ENCODE measurements at regions of chr10 and their contacts with region 1.

Region 1: DNA sequence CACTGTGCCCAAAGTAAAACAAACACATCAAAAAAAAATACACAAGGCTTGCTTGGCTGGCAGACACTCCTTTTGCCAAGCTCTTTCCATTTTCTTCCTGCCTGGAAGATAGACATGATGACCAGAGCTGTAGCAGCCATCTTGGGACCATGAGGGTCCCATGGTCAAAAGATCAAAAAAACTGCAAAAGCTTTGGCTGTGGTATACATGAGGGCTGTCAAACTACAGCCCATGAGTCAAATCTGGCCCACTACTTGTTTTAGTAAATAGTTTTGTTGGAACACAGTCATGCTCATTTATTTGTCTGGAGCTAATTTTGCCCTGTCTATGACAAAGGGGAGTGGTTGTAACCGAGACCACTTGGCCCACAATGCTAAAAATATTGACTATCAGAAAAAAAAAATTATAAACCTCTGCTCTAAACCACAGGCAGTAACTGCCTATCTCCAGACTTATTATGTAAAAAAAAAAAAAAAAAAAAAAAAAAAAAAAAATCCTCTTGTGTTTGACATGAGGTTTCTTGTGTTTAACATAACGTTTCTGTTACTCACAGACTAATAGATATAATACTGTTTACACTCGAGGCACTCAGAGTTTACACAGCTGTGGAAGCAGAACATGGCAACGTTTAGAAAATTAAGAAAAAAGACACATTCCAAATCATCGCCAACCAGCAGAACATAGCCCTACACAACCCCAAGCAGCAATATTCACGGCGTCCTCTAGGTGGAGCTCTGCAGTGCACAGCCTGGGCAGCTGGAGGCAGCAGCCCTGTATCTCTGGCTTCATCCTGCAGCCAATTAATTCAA is 36.9 kb downstream of the ASB13 start:
- DNase-seq: peak; percentile 78
- CTCF ChIP-seq: peak; percentile 93

Region 2: GRCh38 chr10:5434017-5434753 is 195.3 kb before region 1 on chr10:
- CTCF ChIA-PET with region 1: interaction called, 145 read pairs
- POLR2A ChIA-PET with region 1: no interaction called
- DNase-seq: peak; percentile 31
- CTCF ChIP-seq: peak; percentile 66

Region 3: GRCh38 chr10:5446390-5446926 is 183.0 kb before region 1 on chr10:
- CTCF ChIA-PET with region 1: interaction called, 145 read pairs
- POLR2A ChIA-PET with region 1: no interaction called
- DNase-seq: peak; percentile 58
- CTCF ChIP-seq: no peak

Region 4: DNA sequence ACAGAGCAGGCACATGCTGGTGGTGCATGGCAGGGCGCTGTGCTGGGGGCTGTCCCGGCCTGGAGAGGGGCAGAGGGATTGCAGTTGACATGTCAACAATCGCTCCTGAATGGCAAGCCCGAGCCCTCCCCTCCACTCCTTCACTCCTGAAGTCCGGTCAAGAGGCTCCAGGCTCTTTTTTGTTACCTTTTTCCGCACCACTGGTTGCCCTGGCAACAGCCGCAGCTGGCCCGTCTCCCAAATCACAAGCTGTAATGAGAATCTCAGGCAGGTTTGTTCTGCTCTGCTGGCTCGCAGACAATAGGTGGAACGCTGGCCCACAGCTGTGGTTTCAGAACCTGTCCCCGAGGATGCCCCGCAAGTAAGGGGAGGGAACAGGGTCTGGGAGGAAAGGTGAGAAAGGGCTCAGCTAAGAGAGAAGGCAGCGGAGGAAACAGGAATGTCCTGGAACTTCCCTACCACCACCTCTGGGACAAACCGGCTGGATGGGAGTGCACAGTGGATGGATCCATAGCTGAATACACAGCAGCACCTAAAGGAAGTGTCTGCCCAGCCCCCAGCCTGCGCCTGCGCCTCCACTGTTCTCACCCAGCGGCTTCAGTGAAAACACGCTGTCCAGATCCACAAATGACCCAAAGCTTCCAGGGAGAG is 45.9 kb before region 1 on chr10:
- CTCF ChIA-PET with region 1: interaction called, 17 read pairs
- POLR2A ChIA-PET with region 1: no interaction called
- DNase-seq: no peak
- CTCF ChIP-seq: no peak

Region 5: DNA sequence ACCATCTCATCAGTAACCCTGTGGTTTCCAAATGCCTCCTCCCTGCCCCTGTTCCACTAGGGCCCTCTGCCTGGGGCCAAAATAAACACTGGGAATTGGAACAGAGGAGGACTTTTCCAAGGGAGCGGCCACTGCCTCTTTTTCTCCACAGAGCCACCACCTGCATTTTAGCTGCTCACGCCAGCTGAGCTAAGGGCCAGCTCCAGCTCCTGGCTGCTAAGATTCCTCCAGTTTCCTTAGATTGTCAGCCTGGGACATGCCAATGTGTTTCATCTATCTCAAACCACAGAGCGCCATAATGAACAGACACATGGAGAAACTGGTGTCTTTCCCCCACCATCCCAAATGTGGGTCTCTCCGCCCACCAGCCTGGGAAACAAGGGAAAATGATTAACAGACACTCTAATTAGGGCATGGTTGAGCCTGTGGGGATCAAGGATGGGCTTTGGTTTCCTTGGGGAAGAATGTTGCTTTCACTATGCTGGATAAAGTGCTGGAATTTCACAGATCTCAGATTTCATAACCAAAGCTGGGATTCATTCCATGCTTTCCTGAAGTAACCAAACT is 15.3 kb before region 1 on chr10:
- CTCF ChIA-PET with region 1: interaction called, 73 read pairs
- POLR2A ChIA-PET with region 1: no interaction called
- DNase-seq: no peak
- CTCF ChIP-seq: no peak

Region 6: GRCh38 chr10:5645375-5645774 is 15.9 kb after region 1 on chr10:
- CTCF ChIA-PET with region 1: interaction called, 30 read pairs
- POLR2A ChIA-PET with region 1: no interaction called
- DNase-seq: no peak
- CTCF ChIP-seq: no peak

Region 7: DNA sequence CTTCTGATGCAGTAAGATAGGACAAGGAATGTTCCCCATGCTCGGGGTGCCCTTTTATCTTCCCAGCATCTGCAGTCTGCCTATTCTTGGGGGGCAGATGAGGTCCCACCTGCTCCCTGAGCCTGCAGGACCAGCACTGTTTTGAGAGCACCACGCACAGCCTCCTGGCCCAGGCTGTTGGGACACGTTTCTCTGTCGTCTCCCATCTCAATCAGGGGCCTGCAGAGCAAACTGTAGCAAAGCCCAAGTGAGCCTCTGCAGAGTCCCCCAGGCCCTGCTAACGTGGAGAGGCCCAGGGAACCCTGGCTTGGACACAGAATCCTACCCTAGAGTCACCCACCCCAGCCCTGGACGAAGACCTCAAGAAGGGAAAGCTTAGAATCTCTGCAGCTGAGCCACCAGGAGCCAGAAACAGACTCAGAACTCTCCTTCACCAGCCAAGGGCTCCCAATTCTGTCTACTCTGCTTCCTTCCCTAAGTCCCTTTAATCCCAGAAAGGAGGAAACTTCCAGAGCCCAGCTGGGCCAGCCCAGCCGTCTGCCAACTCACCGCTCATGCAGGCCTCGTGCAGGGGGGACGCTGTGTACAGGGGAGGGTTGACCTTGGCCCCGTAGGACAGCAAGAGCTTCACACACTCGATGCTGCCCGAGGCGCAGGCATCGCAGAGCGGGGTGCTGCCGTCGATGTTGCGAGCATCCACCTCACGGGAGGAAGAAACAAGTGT is 21.3 kb after region 1 on chr10:
- CTCF ChIA-PET with region 1: interaction called, 11 read pairs
- POLR2A ChIA-PET with region 1: no interaction called
- DNase-seq: no peak
- CTCF ChIP-seq: no peak

Region 8: GRCh38 chr10:5710859-5711258 is 81.4 kb after region 1 on chr10:
- CTCF ChIA-PET with region 1: no interaction called
- POLR2A ChIA-PET with region 1: no interaction called
- DNase-seq: no peak
- CTCF ChIP-seq: no peak

Region 9: DNA sequence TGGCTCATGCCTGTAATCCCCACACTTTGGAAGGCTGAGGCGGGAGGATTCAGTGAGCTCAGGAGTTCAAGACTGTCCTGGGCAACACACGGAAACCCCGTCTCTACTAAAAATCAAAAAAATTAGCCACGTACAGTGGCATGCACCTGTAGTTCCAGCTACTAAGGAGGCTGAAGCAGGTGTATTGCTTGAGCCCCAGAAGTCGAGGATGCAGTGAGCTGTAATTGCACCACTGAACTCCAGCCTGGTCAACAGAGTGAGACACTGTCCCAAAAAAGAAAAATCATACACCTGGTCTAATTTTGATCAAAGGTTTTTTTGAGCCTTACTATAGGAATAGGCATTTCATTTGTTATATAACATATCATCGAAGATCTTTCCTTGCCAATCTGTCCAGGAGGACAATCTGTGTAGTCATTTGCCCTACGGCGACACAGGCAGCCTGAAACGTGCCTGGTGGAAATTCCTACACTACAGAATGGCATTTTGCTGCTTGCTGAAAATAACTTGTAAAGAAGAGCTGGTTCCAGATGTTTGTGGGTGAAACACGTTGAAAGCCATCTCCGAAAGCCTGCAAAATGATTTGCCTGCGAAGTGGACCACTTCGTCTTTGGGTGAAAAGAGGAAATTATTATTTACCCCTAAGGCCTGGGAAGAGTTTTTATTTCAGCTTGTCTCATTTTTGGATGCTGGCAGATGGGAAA is 215.0 kb after region 1 on chr10:
- CTCF ChIA-PET with region 1: no interaction called
- POLR2A ChIA-PET with region 1: no interaction called
- DNase-seq: no peak
- CTCF ChIP-seq: no peak